AG04449 (cell line): ENCODE measurements at regions of chr17 and their contacts with region 1.

Region 1: GRCh38 chr17:45135192-45135977 is at the start of gene ACBD4:
- DNase-seq: peak; percentile 86
- H3K4me3 ChIP-seq: peak within 1 kb of the TSS; percentile 75
- CTCF ChIP-seq: peak; percentile 100

Region 2: DNA sequence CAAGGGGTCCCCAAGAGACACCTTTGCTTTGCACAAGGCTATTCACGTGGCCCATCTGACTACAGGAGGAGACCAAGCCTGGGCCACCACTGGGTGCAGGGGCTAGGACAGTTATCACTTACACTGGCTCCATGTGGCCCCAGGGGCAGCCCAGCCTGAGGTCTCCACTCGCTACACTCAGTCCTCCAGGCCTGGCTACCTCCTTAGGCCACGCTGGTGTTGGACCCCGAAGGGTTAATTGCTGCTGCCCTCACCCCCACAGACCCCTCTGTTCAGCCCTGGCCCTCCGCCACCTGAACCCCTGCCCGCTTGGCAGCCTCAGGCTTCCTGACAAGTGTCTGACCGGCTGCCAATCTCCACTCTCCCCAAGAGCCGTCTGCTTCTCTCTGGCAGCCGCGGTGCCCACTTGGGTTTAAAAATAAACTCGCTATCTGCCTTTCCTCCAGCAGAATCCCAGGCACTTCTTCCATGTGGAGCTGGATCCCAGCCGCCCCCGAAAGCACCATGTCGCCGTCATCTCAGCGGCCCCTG is 348.8 kb before region 1 on chr17:
- CTCF ChIA-PET with region 1: no interaction called
- POLR2A ChIA-PET with region 1: no interaction called
- DNase-seq: no peak
- H3K4me3 ChIP-seq: no peak overlapping the region
- CTCF ChIP-seq: no peak

Region 3: GRCh38 chr17:44911133-44912001 is 224.0 kb before region 1 on chr17:
- CTCF ChIA-PET with region 1: interaction called, 16 read pairs
- POLR2A ChIA-PET with region 1: no interaction called
- DNase-seq: no peak
- H3K4me3 ChIP-seq: no peak overlapping the region
- CTCF ChIP-seq: peak; percentile 62

Region 4: DNA sequence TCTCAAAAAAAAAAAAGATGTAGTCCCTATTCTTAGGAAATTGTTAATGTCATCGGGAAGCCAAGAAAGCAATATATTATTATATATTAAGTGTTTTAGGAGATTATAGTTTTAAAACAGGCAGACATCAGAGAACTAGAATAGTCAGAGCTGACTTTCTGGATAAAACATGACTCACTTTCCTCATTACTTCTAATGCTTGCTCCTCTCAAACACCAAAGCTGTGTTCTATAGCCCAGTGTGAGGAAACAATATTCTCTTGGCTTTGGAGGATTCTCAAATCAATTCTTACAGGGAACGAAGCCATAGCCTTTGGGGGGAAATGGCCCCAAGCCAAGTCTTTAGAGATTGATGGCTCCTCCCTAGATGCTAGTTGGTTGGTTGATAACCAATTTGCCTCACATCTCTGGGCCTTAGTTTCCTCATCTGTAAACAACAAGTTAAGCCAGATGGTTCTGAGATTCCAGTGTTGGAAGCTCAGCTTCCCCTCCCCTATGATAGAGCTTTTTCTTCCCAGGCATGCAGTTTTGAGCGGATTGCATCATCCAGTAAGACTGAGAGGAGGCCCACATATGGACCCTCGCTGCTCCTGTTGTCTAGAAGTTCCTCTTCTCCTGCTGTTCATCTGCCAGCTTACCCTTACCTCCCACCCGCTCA is 61.8 kb before region 1 on chr17:
- CTCF ChIA-PET with region 1: interaction called, 15 read pairs
- POLR2A ChIA-PET with region 1: no interaction called
- DNase-seq: peak; percentile 77
- H3K4me3 ChIP-seq: no peak overlapping the region
- CTCF ChIP-seq: no peak

Region 5: DNA sequence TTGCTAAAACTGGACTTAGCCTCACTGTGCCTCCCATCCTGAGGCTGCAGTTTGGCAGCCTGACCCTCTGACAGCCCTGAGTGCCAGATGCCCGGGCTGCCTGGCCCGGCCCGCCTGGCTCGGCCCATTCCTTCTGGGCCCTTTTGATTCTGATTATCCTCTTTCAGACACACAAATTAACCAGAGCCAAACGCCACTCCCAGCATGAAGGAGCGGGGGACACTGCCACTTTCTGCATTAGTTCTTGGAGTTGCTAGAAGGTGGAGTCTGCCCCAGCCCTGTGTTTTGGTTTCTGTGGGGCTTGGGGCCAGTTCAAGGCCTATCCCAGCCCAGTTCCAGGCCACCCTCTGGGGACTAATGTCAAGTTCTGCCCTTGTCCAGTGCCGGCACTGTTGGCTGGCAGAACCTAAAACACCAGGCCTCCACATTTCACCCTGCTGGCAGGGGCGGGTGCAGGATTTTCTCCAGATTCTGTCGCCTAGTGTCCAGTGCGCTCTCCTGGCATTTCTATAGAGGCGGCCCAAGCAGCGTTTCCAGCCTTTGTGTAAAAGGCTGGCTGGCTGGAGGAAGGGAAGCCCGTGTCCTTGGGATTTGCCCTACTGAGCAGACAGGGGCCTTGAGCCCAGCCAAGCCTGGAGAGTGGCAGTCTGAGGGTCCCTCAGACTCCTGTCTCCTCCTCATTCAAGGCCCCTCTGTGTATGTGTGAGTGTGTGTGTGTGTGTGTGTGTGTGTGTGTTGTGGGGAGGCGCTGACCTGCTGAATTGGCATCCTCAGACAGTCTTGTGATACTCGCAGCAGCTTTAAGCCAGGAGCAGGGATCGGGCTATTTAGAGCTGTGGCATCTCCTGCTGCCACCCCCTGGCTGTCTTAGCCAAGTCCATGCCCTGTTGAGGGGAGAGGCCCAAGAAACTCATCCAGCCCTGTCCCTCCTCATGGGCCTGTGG is 24.4 kb before region 1 on chr17:
- CTCF ChIA-PET with region 1: interaction called, 24 read pairs
- POLR2A ChIA-PET with region 1: interaction called, 3 read pairs
- DNase-seq: no peak
- H3K4me3 ChIP-seq: no peak overlapping the region
- CTCF ChIP-seq: no peak

Region 6: DNA sequence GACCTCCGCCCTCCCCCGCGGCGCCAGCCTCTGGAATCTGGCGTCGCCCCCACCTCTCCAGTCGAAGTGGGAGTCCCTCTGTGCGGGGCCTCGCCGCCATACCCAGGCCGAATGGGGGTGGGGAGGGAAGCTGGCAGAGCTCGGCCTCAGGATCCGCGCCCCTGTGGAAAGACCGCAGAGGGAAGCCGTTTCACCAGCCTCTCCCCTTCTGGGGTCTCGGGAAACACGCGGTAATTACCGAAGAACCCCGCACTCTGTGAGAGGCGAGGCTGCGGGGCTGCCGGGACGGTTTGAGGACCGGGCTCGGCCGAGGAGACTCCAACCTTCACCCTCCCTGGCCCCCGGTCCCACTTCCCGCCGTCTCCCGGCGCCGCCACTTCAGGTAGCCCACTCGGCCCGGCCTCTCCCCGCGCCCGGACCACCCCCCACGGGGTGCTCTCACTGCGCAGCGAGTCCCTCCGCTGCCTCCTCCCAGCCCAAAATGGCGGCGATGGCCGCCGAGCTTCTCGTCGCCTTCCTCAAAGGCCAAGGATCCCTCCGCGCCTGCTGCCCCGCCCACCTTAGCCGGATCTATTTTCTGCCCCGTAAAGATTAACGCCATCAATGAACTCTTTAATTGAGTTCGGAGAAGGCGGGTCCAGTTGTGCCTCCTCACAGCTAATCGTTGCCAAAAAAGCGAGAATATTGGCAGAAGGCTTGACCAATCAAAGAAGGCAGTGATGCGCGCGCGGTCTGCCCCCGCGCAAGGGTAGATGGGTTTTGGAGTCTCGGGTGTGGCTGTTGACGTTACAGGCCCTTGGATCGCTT is 25.8 kb after region 1 on chr17:
- CTCF ChIA-PET with region 1: interaction called, 236 read pairs
- POLR2A ChIA-PET with region 1: interaction called, 5 read pairs
- DNase-seq: peak; percentile 100
- H3K4me3 ChIP-seq: peak overlapping the region; percentile 92
- CTCF ChIP-seq: no peak

Region 7: DNA sequence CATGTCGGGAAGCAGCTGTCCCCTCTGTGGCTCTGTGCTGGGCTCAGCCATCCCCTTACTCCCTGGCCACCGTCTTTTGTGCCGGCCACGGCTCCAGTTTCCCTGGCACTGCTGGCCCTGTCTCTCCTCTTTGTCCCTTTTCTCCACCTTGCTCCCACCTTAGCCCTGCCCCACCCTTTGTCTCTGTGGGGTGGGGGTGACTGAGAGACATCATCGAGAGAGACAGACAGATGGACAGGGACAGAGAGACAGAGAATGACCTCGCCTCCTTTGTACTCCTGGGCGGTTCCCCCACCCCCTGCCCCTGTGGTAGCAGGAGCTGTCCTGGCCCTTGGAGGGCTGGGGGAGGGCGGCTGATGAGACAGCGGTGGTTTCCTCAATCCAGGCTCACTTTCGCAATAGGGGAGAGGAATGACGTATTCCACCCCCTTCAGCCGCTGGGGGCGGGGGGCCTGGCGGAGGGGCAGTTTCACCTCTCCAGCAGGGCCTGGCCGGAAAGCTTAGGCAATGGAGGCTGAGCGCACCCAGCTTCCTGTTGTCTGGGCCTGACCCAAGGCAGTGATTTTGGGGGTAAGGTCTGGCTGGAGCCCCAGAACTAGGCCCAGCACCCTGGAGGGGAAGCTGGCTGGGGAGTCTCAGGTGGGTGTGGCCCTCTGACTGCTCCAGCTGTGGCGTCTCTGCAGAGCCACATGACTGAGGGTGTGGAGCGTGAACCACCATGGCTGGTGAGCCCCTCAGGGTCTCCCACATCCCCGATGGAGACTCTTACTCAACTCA is 93.6 kb after region 1 on chr17:
- CTCF ChIA-PET with region 1: interaction called, 63 read pairs
- POLR2A ChIA-PET with region 1: no interaction called
- DNase-seq: peak; percentile 54
- H3K4me3 ChIP-seq: no peak overlapping the region
- CTCF ChIP-seq: no peak

Region 8: DNA sequence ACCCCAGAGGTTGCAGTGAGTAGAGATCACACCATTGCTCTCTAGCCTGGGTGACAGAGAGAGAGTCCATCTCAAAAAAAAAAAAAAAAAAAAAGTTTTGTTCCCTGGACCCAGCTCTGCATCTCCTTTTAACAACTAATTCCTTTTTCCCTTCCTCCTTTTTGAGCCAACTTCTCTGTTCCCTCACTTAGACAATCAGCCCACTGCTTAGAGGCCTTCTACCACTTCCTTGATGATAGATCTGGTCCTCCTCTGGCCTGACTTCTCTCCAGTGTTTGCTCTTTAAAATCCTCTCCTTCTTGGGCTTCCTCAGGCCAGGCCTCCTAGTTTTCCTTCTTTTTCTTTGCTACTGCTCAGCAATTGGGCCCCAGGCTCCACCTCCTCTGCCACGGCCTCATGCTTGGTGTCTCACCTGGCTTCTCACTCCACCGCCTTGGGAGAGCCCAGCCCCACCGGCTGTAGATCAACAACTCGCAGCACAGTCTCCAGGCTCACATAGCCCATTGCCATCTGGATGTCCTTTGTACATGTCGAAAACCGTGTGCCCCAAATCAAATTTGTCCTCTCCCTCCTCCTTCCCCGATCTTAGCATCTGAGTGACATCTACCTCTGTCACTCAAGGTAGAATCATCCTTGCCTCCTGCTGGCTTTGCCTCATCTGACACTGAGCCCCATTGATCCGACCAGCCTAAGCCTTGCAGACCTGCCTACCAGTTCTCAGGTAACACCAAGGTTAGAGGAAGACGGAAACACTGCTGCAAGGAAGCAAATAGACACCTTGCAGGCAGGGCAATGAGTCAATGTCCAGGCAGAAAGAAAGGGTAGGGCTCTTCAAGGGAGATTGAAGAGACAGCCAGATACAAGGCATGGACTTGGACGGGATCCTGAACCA is 279.9 kb after region 1 on chr17:
- CTCF ChIA-PET with region 1: no interaction called
- POLR2A ChIA-PET with region 1: no interaction called
- DNase-seq: no peak
- H3K4me3 ChIP-seq: no peak overlapping the region
- CTCF ChIP-seq: no peak